HEK293T (cell line): ENCODE measurements at regions of chr7 and their contacts with region 1.

Region 1: DNA sequence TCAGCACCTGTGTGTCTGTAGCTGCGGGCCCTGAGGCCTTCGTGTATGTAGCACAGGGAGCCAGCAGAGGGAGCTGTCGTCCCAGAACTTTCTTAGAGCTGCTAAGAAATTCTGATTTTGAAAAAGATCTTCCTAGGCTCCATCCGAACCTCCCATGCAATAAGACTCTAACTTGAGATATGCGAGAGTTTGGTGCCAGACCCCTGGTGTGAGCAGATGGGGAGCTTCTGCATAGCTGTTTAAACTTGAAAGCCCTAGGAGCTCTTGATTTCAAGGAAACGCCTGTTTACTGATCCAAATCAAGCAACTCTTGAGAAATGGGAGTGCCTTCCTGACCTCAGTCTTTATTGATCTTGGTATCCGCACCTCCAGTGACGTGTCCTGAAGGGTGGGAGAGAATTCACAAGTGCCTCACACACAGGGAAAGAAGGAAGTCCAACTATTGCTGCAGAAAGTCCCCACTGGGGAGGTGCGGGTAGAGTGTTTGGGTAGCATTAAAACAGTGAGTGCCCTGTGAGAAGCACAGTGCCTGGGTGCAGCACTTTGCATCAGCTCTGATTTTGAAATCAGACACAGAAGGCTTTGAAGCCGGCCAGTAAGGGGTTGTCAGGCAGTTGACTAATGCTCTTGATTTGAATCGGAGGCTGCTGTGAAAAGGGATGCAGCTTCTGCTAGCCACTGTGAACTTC is 66.4 kb upstream of the STRIP2 start:
- DNase-seq: peak; percentile 73

Region 2: GRCh38 chr7:129210256-129210988 is 157.4 kb before region 1 on chr7:
- CTCF ChIA-PET with region 1: interaction called, 13 read pairs
- POLR2A ChIA-PET with region 1: no interaction called
- DNase-seq: peak; percentile 71

Region 3: DNA sequence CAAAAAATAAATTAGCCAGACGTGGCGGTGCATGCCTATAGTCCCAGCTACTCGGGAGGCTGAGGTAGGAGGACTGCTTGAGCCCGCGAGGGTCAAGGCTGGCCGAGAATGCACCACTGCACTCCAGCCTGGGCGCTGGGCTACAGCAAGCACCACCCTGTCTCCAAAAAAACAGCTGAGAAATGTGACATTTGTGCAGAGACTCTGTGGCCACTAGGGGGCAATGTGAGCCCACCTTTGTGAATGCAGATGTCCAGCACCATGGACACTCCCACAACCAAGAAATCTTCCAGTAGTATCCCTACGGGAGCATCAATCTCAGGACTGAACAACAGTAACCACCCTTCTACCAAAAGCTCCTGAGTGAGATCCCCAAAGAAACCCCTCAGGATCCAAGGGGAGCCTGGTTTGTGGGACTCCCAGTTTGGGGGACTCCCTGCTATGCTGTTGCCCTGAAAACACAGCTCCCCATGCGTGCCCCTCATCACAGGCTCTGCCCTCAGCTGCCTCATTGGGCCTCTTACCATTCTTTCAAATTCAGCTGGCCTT is 149.3 kb before region 1 on chr7:
- CTCF ChIA-PET with region 1: interaction called, 17 read pairs
- POLR2A ChIA-PET with region 1: no interaction called
- DNase-seq: peak; percentile 77

Region 4: GRCh38 chr7:129471402-129471827 is 103.6 kb after region 1 on chr7:
- CTCF ChIA-PET with region 1: interaction called, 27 read pairs
- POLR2A ChIA-PET with region 1: no interaction called
- DNase-seq: no peak